CD8-positive, alpha-beta T cell (primary cell): ENCODE measurements at regions of chr17 and their contacts with region 1.

Region 1: DNA sequence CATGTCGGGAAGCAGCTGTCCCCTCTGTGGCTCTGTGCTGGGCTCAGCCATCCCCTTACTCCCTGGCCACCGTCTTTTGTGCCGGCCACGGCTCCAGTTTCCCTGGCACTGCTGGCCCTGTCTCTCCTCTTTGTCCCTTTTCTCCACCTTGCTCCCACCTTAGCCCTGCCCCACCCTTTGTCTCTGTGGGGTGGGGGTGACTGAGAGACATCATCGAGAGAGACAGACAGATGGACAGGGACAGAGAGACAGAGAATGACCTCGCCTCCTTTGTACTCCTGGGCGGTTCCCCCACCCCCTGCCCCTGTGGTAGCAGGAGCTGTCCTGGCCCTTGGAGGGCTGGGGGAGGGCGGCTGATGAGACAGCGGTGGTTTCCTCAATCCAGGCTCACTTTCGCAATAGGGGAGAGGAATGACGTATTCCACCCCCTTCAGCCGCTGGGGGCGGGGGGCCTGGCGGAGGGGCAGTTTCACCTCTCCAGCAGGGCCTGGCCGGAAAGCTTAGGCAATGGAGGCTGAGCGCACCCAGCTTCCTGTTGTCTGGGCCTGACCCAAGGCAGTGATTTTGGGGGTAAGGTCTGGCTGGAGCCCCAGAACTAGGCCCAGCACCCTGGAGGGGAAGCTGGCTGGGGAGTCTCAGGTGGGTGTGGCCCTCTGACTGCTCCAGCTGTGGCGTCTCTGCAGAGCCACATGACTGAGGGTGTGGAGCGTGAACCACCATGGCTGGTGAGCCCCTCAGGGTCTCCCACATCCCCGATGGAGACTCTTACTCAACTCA is 7.3 kb downstream of the FMNL1 start:
- DNase-seq: peak; percentile 60 to 95 (median 83)
- ATAC-seq: peak; percentile 50
- H3K4me3 ChIP-seq: peak overlapping the region; percentile 84 to 97
- H3K4me3 Mint-ChIP-seq: peak overlapping the region; percentile 100
- H3K27ac ChIP-seq: peak overlapping the region; percentile 97
- H3K27ac Mint-ChIP-seq: peak overlapping the region; percentile 100
- H3K4me1 ChIP-seq: peaks cover 93% of the 10 kb centered on the region
- H3K4me1 Mint-ChIP-seq: peaks cover 82% of the 10 kb centered on the region
- H3K27me3 ChIP-seq: no peaks in the 10 kb centered on the region
- H3K27me3 Mint-ChIP-seq: no peaks in the 10 kb centered on the region
- CTCF ChIP-seq: no peak

Region 2: DNA sequence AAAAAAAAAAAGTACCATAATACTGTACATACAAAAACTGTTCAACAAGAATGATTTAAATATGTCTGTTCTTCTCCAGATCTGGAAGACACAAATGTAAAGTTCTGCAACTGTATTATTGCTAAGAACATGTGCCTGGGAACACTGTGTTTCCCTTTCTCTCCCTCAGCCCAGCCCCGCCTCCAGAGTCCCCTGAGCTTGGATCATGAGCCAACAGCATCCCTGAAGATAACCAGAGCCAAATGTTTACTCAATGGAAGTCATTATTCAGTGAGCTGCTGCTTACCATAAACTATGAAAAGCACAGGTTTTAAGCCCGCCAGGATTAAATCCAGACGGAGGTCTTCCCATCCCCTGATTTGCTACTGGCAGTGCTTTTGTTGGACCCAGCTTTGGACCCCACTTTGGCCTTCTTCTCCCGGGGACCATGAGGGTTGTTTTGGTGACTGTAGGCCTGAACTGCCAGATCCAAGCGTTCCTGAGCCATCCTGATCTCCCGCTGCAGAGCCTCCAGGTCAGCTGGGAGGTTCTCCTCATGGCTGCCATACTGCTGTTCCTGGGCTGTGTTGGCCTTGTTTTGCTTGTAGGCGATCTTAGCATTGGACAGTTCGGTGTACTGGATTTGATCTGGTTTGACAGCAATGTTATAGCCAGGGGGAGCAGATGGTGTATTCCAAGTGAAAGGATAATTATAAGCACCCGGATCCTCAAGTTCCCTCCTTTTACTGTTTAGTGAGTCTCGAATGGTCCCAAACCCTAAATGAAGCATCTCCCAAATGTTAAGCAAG is 424.5 kb before region 1 on chr17:
- CTCF ChIA-PET with region 1: no interaction called
- POLR2A ChIA-PET with region 1: no interaction called
- intact Hi-C with region 1: no loop called
- DNase-seq: no peak
- ATAC-seq: no peak
- H3K4me3 ChIP-seq: no peak overlapping the region
- H3K4me3 Mint-ChIP-seq: no peak overlapping the region
- H3K27ac ChIP-seq: no peak overlapping the region
- H3K27ac Mint-ChIP-seq: no peak overlapping the region
- H3K4me1 ChIP-seq: no peaks in the 10 kb centered on the region
- H3K4me1 Mint-ChIP-seq: no peaks in the 10 kb centered on the region
- H3K27me3 ChIP-seq: no peaks in the 10 kb centered on the region
- H3K27me3 Mint-ChIP-seq: peaks cover 7% of the 10 kb centered on the region
- CTCF ChIP-seq: no peak

Region 3: DNA sequence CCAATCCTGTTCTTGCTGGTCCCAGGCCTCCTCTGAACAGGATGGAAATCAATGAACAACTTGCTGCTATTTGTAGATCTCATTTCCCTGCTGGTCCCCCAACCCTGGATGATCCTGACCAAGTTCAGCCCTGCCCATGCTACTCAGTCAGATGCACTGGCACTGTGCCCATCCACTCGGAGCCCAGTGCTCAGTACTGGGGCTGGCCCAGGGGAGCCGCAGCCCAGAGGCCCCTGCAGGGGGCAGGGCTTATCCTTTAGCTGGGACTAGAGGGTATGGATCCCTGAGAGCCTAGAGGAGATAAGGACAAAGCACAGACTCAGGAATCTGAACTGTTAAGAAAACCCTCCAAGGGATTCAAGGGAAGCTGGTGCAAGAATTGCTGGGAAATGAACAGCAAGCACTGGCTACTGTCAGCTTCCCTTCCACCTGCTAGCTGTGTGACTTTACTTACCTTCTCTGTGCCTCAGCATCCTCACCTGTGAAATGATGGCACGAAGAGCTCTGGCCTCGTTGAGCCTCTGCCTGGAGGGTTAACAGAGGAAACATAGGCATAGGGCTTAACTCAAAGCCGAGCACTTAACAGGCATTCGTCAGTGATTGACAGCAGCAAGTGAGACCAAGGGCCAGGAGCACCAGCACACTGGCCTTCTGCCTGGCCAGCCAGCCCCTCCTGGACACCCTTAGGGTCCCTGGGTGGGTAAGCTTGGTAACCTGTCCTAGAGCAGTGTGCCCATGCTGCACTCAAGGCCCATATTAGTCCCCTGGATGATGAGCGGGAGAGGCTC is 231.0 kb before region 1 on chr17:
- CTCF ChIA-PET with region 1: no interaction called
- POLR2A ChIA-PET with region 1: no interaction called
- intact Hi-C with region 1: no loop called
- DNase-seq: no peak
- ATAC-seq: no peak
- H3K4me3 ChIP-seq: no peak overlapping the region
- H3K4me3 Mint-ChIP-seq: no peak overlapping the region
- H3K27ac ChIP-seq: no peak overlapping the region
- H3K27ac Mint-ChIP-seq: no peak overlapping the region
- H3K4me1 ChIP-seq: no peaks in the 10 kb centered on the region
- H3K4me1 Mint-ChIP-seq: no peaks in the 10 kb centered on the region
- H3K27me3 ChIP-seq: no peaks in the 10 kb centered on the region
- H3K27me3 Mint-ChIP-seq: peaks cover 10% of the 10 kb centered on the region
- CTCF ChIP-seq: no peak

Region 4: DNA sequence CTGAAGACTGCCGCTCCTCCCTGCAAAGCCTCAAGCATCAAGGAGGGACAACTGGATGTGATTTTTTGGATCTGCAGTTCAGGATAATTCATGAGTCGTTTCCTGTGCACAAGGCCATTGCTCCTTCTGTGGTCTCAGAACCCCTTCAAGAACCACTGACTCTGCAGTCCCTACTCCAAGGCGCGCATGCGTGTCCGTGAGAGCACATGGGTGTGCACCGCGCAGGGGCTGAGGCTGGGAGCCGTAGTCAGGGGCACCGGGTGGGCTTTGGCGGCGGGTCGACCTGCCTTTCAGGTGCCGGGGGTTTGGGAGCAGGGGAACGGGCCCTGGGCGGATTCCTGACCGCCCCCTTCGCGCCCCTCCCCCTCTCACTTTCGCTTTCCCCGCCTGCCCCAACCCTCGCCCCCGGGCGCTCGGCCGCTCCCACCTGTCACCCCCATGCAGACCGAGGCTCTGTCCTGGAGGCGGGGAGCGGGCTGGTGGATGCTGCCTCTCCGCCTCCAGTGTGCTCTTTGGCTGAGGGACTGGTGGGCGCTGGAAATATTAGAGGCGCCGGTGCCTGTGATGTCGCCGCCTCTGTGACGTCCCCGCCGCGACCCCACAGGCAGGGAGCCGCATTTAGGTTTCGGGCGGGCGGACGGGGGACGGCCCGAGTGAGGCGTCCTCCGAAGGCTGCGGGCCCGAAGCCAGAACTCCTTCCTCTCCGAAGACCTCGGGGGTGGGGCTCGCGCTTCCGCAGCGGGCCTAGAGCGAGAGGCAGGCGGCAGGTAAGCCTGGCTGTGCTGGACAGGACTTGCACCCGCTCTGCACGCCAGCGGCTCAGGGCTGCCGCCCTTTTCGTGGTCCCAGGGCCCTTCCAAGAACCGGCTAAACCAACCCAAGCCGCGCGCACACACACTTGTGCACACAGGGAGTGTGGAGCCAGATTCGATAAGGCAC is 32.9 kb after region 1 on chr17 and contains the start of gene SPATA32:
- CTCF ChIA-PET with region 1: interaction called, 1,097 read pairs
- POLR2A ChIA-PET with region 1: no interaction called
- intact Hi-C with region 1: loop called in 1 of 2 experiments (anchors 5 kb)
- DNase-seq: peak; percentile 37 to 85 (median 75)
- ATAC-seq: peak; percentile 86
- H3K4me3 ChIP-seq: peak within 1 kb of the TSS; percentile 71 to 76
- H3K4me3 Mint-ChIP-seq: peak within 1 kb of the TSS; percentile 83
- H3K27ac ChIP-seq: peak within 1 kb of the TSS; percentile 29 to 74
- H3K27ac Mint-ChIP-seq: peak within 1 kb of the TSS; percentile 87
- H3K4me1 ChIP-seq: peaks cover 32% of the 10 kb centered on the region
- H3K4me1 Mint-ChIP-seq: peaks cover 29% of the 10 kb centered on the region
- H3K27me3 ChIP-seq: no peaks in the 10 kb centered on the region
- H3K27me3 Mint-ChIP-seq: no peaks in the 10 kb centered on the region
- CTCF ChIP-seq: no peak
- total RNA-seq, gene SPATA32: 0.22 TPM in 1 of 2 experiments, not detected in the other

Region 5: GRCh38 chr17:45270828-45271418 is 42.0 kb after region 1 on chr17:
- CTCF ChIA-PET with region 1: interaction called, 206 read pairs
- POLR2A ChIA-PET with region 1: no interaction called
- intact Hi-C with region 1: loop called in 1 of 2 experiments (anchors 2 kb)
- DNase-seq: peak; percentile 21 to 75 (median 58)
- ATAC-seq: peak; percentile 95
- H3K4me3 ChIP-seq: no peak overlapping the region
- H3K4me3 Mint-ChIP-seq: no peak overlapping the region
- H3K27ac ChIP-seq: no peak overlapping the region
- H3K27ac Mint-ChIP-seq: peak overlapping the region; percentile 27
- H3K4me1 ChIP-seq: no peaks in the 10 kb centered on the region
- H3K4me1 Mint-ChIP-seq: peaks cover 6% of the 10 kb centered on the region
- H3K27me3 ChIP-seq: no peaks in the 10 kb centered on the region
- H3K27me3 Mint-ChIP-seq: no peaks in the 10 kb centered on the region
- CTCF ChIP-seq: peak; percentile 84

Region 6: GRCh38 chr17:45317112-45317928 is 88.4 kb after region 1 on chr17:
- CTCF ChIA-PET with region 1: interaction called, 7 read pairs
- POLR2A ChIA-PET with region 1: interaction called, 22 read pairs
- intact Hi-C with region 1: loop called (anchors 1 to 2 kb)
- DNase-seq: peak; percentile 99 to 100 (median 100)
- ATAC-seq: peak; percentile 81
- H3K4me3 ChIP-seq: peak overlapping the region; percentile 55 to 81
- H3K4me3 Mint-ChIP-seq: peak overlapping the region; percentile 95
- H3K27ac ChIP-seq: peak overlapping the region; percentile 75 to 81
- H3K27ac Mint-ChIP-seq: peak overlapping the region; percentile 94
- H3K4me1 ChIP-seq: peaks cover 78% of the 10 kb centered on the region
- H3K4me1 Mint-ChIP-seq: peaks cover 80% of the 10 kb centered on the region
- H3K27me3 ChIP-seq: no peaks in the 10 kb centered on the region
- H3K27me3 Mint-ChIP-seq: no peaks in the 10 kb centered on the region
- CTCF ChIP-seq: no peak